ENCODE measurements at regions of chr19 and their contacts with region 1.

Region 1: GRCh38 chr19:51628153-51628939 is 1.9 kb downstream of the SIGLEC5 start:
- DNase-seq: no peak
- H3K4me3 ChIP-seq: no peak overlapping the region
- H3K27ac ChIP-seq: no peak overlapping the region
- H3K4me1 ChIP-seq: no peaks in the 10 kb centered on the region
- H3K27me3 ChIP-seq: peaks cover 56% of the 10 kb centered on the region
- CTCF ChIP-seq: no peak

Region 2: DNA sequence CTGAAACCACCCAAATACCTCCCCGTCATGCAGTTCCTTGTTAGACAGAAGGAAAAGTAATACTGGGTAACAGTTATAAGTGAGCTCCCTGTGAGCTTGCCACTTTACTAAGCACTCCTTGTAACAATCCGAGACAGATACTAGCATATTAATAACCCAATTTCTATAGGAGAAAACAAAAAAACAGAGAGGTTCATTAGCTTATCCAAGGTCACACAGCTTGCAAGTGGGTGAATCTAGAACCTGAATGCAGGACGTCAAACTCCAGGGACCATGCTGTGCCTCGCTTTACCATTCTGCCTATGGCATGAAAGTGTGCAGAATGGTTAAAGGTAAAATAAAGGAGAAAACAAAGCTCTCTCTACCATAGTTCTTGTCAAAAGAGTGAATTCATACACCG is 13.6 kb before region 1 on chr19:
- CTCF ChIA-PET with region 1: no interaction called
- POLR2A ChIA-PET with region 1: interaction called, 11 read pairs
- intact Hi-C with region 1: no loop called
- DNase-seq: no peak
- H3K4me3 ChIP-seq: no peak overlapping the region
- H3K27ac ChIP-seq: no peak overlapping the region
- H3K4me1 ChIP-seq: no peaks in the 10 kb centered on the region
- H3K27me3 ChIP-seq: peaks cover 38% of the 10 kb centered on the region
- CTCF ChIP-seq: no peak

Region 3: DNA sequence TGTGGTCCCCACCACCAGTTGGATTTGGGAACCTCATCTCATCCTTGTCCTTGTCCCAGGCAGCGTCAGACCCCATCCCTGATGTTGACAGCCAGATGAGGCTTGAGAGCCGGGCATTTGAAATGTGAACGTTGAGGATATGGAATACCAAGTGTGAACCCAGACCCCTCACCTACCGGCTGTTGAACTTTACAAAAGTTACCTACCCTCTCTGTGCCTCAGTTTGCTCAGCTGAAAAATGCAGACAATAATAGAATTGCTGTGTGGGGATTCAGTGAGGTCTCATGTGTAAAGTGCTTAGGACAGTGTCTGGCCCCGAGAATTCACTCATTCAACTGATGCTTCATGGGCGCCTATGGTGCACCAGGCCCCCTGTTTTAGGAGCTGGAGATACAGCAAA is 19.0 kb after region 1 on chr19:
- CTCF ChIA-PET with region 1: no interaction called
- POLR2A ChIA-PET with region 1: no interaction called
- intact Hi-C with region 1: loop called (anchors 2 kb)
- DNase-seq: no peak
- H3K4me3 ChIP-seq: no peak overlapping the region
- H3K27ac ChIP-seq: no peak overlapping the region
- H3K4me1 ChIP-seq: no peaks in the 10 kb centered on the region
- H3K27me3 ChIP-seq: peaks cover 29% of the 10 kb centered on the region
- CTCF ChIP-seq: no peak

Measured in A673 (cell line).